Right lobe of liver (tissue), 6 donors: ENCODE measurements at regions of chr3 and their contacts with region 1.

Region 1: DNA sequence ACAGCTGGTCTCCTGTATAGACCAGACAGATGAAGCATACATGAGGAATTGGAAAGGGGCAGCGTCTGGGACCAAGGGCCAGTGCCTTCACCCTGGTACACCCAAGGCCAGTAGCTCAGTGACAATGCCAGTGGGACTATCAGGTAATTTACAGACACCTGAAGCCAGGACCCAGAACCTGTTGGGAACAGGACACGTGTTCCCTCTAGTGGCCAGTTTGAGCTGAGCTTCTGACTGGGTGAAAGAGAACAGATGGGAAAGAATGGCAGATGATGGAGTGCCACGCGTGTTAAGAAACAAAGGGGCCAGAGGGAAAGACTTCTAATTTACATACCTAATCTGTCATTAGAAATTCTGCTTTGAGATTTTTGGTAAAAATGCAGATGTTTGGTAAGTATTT is 5.1 kb upstream of the SLC25A38 start:
- DNase-seq: peak; percentile 47 to 79 (median 64)
- ATAC-seq: peak; percentile 79 to 87 (median 82)
- H3K4me3 ChIP-seq: no peak overlapping the region
- H3K27ac ChIP-seq: peak overlapping the region in 1 of 3 donors; percentile 87
- H3K4me1 ChIP-seq: peaks cover 0 to 34% (median 8%) of the 10 kb centered on the region in 4 donors
- H3K27me3 ChIP-seq: no peaks in the 10 kb centered on the region
- CTCF ChIP-seq: peak; percentile 74 to 87 (median 83)
- POLR2A ChIP-seq: no peak

Region 2: GRCh38 chr3:39189959-39190269 is 188.2 kb before region 1 on chr3:
- intact Hi-C with region 1: loop called in 1 of 2 experiments (anchors 10 kb)
- DNase-seq: peak; percentile 63 to 79 (median 70)
- ATAC-seq: peak; percentile 84 to 97 (median 91)
- H3K4me3 ChIP-seq: no peak overlapping the region
- H3K27ac ChIP-seq: peak overlapping the region in 1 of 3 donors; percentile 4
- H3K4me1 ChIP-seq: no peaks in the 10 kb centered on the region
- H3K27me3 ChIP-seq: no peaks in the 10 kb centered on the region
- CTCF ChIP-seq: peak; percentile 74 to 90 (median 84)
- POLR2A ChIP-seq: no peak